Left cardiac atrium (tissue), 4 donors: ENCODE measurements at regions of chr11 and their contacts with region 1.

Region 1: GRCh38 chr11:15911377-15912044 is 444.8 kb downstream of the SOX6 start:
- DNase-seq: peak; percentile 79
- ATAC-seq: peak; percentile 66 to 75

Region 2: GRCh38 chr11:15969281-15969680 is 57.8 kb after region 1 on chr11:
- intact Hi-C with region 1: loop called in 1 of 2 experiments (anchors 10 kb)
- DNase-seq: peak; percentile 62
- ATAC-seq: peak; percentile 89 to 93